Panc1 (cell line): ENCODE measurements at regions of chrX and their contacts with region 1.

Region 1: DNA sequence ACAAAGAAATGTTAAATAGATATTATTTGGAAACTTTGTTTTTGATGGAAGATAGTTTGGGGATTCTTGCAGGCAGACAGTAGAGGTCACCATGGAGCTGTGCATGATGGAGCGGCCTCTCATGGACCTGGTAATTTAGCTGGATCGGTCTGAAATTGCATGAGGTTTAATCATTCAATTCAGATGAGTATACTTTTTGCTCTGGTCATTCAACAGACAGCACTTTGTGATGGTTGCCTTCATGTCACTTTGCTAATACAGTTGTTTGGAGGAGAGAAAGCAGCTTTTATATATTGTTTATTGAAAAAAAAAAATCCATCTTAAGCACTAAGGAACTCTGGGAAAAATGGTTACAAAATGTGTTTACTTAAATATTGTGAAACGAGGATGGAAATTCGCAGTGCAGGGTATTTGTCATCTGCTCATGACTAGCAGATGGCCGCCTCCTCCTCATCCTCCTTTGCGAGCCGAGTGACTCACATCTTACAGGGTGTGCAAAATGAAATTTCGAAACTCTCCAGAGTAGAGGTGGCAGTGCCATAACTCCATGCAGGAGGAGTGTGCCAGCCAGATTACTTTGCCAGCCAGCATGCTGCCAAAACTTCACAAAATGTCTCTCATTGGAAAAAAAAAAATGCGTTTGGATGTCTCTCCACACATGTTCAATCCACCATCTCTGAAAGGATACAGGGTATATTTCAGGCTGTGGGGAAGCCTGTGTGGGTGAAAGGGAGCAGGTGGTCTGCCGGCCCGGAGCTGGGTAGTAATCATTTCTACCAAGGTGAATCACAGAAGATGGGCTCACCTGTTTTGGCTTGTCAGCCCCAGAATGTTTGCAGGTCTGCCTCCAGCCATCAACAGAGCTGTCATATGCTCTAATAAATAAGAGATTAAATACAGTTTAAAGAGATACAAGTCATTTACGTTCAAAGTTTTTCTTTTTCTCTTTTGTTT is 314.9 kb upstream of the DIPK2B start:
- DNase-seq: peak; percentile 80
- ATAC-seq: peak; percentile 88
- H3K4me3 ChIP-seq: peak overlapping the region in 1 of 2 experiments; percentile 48; a peak in 2 of 4 replicates
- H3K27ac ChIP-seq: peak overlapping the region; percentile 59; the same call in 1 of the 2 replicates
- H3K4me1 ChIP-seq: peaks cover 7% of the 10 kb centered on the region
- H3K27me3 ChIP-seq: no peaks in the 10 kb centered on the region
- CTCF ChIP-seq: peak; percentile 82

Region 2: GRCh38 chrX:45385757-45386156 is 129.8 kb before region 1 on chrX:
- CTCF ChIA-PET with region 1: no interaction called
- POLR2A ChIA-PET with region 1: no interaction called
- in situ Hi-C with region 1: no loop called
- intact Hi-C with region 1: no loop called
- DNase-seq: no peak
- ATAC-seq: no peak
- H3K4me3 ChIP-seq: no peak overlapping the region
- H3K27ac ChIP-seq: no peak overlapping the region
- H3K4me1 ChIP-seq: no peaks in the 10 kb centered on the region
- H3K27me3 ChIP-seq: no peaks in the 10 kb centered on the region
- CTCF ChIP-seq: no peak

Region 3: DNA sequence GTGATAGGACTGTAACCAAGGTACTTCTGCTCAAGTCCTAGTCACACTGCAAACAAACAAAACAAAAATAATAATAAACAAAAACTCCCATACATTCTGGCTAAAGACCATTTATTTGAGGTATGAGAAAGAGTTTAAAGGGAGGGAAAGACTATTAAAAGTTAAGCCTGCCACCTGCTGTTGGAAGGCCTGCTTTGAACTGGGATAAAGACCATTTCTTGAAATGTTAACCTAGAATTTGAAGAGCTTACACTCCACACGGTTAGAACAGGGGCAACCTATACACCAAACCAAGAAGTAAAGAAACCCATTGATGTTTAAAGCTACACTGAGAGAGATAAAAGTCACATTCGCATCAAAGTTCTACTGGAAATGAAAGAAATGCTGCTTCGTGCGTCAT is 233.8 kb after region 1 on chrX:
- CTCF ChIA-PET with region 1: no interaction called
- POLR2A ChIA-PET with region 1: no interaction called
- in situ Hi-C with region 1: no loop called
- intact Hi-C with region 1: loop called (anchors 5 kb)
- DNase-seq: no peak
- ATAC-seq: peak; percentile 65; the same call in 1 of the 2 replicates
- H3K4me3 ChIP-seq: no peak overlapping the region
- H3K27ac ChIP-seq: no peak overlapping the region
- H3K4me1 ChIP-seq: peaks cover 33% of the 10 kb centered on the region
- H3K27me3 ChIP-seq: no peaks in the 10 kb centered on the region
- CTCF ChIP-seq: peak; percentile 33; the same call in 1 of the 2 replicates

Region 4: GRCh38 chrX:45843518-45843917 is 328.0 kb after region 1 on chrX:
- CTCF ChIA-PET with region 1: no interaction called
- POLR2A ChIA-PET with region 1: no interaction called
- in situ Hi-C with region 1: no loop called
- intact Hi-C with region 1: loop called (anchors 5 kb)
- DNase-seq: no peak
- ATAC-seq: no peak
- H3K4me3 ChIP-seq: no peak overlapping the region
- H3K27ac ChIP-seq: no peak overlapping the region
- H3K4me1 ChIP-seq: no peaks in the 10 kb centered on the region; the same call in 1 of the 2 replicates
- H3K27me3 ChIP-seq: no peaks in the 10 kb centered on the region
- CTCF ChIP-seq: peak; percentile 29; the same call in 1 of the 2 replicates

Region 5: DNA sequence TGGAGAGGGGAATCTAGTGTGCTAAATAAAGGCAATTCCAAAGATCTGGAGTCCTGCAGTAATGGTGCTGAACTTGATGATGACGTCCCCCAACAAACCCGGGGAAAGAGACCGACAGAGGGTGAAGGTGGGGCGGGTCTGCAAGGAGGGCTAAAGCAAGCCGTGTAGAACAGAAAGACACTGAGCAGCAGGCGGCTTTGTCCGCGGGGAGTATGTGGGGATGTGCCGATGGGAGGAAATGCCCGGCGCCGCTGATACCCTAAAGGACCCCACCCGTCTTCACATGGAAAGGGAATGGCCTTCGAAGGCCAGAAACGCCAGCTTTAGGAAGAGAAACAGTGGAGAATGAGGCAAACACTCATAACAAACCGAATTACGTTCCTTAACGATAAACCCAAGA is 500.8 kb after region 1 on chrX:
- CTCF ChIA-PET with region 1: no interaction called
- POLR2A ChIA-PET with region 1: no interaction called
- in situ Hi-C with region 1: no loop called
- intact Hi-C with region 1: no loop called
- DNase-seq: no peak
- ATAC-seq: no peak
- H3K4me3 ChIP-seq: no peak overlapping the region
- H3K27ac ChIP-seq: no peak overlapping the region
- H3K4me1 ChIP-seq: no peaks in the 10 kb centered on the region
- H3K27me3 ChIP-seq: no peaks in the 10 kb centered on the region
- CTCF ChIP-seq: no peak

Region 6: DNA sequence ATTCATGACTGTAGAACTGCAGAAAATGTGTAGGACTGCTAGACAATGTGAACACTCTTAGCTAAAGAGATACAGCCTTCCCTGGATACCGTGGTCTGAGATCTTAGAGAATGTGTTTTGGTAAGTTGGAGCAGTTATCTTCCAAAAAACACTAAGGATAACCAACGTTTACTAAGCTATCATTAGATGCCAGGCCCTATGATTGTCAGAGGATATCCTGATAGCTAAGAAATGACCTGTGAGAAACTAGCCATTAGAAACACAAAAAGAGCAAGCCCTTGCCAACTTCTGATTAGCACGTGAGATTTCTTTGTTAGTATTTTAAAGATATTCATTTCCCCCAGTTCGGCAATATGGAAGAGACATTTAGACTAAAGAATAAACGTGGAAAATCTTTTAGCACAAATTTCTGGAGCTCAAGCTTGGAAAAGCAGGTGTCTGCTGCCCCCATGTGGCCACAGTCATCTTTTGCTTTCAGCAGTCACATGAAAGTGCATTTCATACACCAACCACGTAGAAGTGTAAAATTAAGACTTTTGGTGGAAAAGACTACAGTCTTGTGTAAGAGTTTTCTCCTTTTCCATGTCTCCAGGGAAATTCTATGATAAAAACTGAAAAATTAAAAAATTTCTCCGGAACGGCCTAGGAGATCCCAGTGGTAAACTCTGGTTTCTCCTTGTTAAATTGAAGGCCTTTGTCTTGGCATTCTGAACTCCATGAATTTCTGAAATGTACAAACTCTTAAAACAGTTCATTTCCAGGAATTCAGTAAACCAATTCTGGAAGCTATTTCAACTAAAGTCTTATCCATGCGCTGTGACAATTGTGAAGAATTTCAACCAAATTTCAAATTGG is 893.2 kb after region 1 on chrX:
- CTCF ChIA-PET with region 1: no interaction called
- POLR2A ChIA-PET with region 1: no interaction called
- in situ Hi-C with region 1: no loop called
- intact Hi-C with region 1: loop called (anchors 10 kb)
- DNase-seq: peak; percentile 30
- ATAC-seq: peak; percentile 48; the same call in 1 of the 2 replicates
- H3K4me3 ChIP-seq: no peak overlapping the region
- H3K27ac ChIP-seq: no peak overlapping the region; the same call in 1 of the 2 replicates
- H3K4me1 ChIP-seq: no peaks in the 10 kb centered on the region
- H3K27me3 ChIP-seq: no peaks in the 10 kb centered on the region
- CTCF ChIP-seq: peak; percentile 78